Activated CD4-positive, alpha-beta memory T cell treated with anti-CD3 and anti-CD28 coated beads for 36 hours (primary cell): ENCODE measurements at regions of chr17 and their contacts with region 1.

Region 1: GRCh38 chr17:41548844-41549595 is 20.9 kb upstream of the KRT19 start:
- DNase-seq: peak; percentile 91
- H3K4me3 Mint-ChIP-seq: no peak overlapping the region
- H3K27ac Mint-ChIP-seq: peak overlapping the region; percentile 70
- H3K4me1 Mint-ChIP-seq: peaks cover 21% of the 10 kb centered on the region
- H3K27me3 Mint-ChIP-seq: peaks cover 7% of the 10 kb centered on the region

Region 2: DNA sequence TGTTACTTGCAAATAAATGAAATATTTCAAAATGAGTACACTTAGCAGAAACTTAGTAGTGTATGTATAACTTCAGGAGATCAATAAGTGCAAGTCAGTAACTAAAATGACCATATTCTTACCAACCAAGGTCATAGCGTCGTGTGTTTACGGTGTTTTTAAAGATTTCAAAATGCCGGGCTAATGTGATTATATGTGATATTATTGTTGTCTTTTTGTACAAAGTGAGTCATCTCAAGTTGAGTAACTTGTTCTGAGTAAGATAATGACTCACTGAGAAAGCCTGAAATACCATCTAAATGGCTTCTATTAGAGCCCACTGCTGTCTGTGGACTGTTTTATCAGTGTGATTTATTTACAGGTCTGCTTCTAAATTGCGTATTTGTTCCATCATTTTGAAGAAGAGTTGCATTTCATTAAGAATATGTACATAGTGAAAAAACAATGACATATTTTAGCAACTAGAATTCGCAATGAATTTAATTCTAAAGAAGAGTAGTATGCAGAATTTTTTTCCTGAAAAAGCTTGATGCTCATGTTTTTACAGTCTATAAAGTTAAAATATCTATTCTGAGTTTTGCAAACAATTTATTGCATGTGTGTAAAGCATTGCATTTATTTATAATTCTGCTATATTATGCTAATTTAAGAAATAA is 694.7 kb before region 1 on chr17:
- CTCF ChIA-PET with region 1: interaction called, 17 read pairs
- POLR2A ChIA-PET with region 1: no interaction called
- intact Hi-C with region 1: no loop called
- DNase-seq: no peak
- H3K4me3 Mint-ChIP-seq: no peak overlapping the region
- H3K27ac Mint-ChIP-seq: no peak overlapping the region
- H3K4me1 Mint-ChIP-seq: peaks cover 2% of the 10 kb centered on the region
- H3K27me3 Mint-ChIP-seq: peaks cover 6% of the 10 kb centered on the region

Region 3: DNA sequence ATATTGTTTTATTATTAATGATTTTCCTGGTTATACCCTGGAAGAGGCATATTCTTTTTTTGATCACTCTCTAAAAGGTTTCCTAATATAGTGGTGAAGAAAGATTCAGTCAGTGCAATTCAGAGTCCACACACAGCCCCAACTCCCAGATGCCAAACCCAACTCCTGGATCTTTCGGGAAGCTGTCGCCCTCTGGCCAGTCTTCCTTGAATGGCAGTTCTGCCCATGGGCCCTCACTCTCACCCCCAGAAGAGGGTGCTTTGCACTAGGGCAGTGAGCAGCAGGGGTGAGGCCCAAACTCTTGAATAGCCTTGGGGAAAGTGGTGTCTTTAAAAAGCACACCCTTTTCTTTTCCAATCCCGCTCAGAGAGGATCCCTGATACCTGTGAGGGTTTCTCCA is 92.8 kb before region 1 on chr17:
- CTCF ChIA-PET with region 1: interaction called, 13 read pairs
- POLR2A ChIA-PET with region 1: no interaction called
- intact Hi-C with region 1: no loop called
- DNase-seq: no peak
- H3K4me3 Mint-ChIP-seq: no peak overlapping the region
- H3K27ac Mint-ChIP-seq: no peak overlapping the region
- H3K4me1 Mint-ChIP-seq: no peaks in the 10 kb centered on the region
- H3K27me3 Mint-ChIP-seq: no peaks in the 10 kb centered on the region

Region 4: GRCh38 chr17:41530062-41531051 is 18.7 kb before region 1 on chr17:
- CTCF ChIA-PET with region 1: interaction called, 26 read pairs
- POLR2A ChIA-PET with region 1: no interaction called
- intact Hi-C with region 1: no loop called
- DNase-seq: no peak
- H3K4me3 Mint-ChIP-seq: no peak overlapping the region
- H3K27ac Mint-ChIP-seq: no peak overlapping the region
- H3K4me1 Mint-ChIP-seq: peaks cover 5% of the 10 kb centered on the region
- H3K27me3 Mint-ChIP-seq: peaks cover 42% of the 10 kb centered on the region

Region 5: GRCh38 chr17:41567317-41567716 is 18.3 kb after region 1 on chr17:
- CTCF ChIA-PET with region 1: interaction called, 27 read pairs
- POLR2A ChIA-PET with region 1: no interaction called
- intact Hi-C with region 1: no loop called
- DNase-seq: peak; percentile 16
- H3K4me3 Mint-ChIP-seq: no peak overlapping the region
- H3K27ac Mint-ChIP-seq: peak overlapping the region; percentile 9
- H3K4me1 Mint-ChIP-seq: peaks cover 6% of the 10 kb centered on the region
- H3K27me3 Mint-ChIP-seq: peaks cover 5% of the 10 kb centered on the region

Region 6: GRCh38 chr17:41648411-41649195 is 99.6 kb after region 1 on chr17:
- CTCF ChIA-PET with region 1: interaction called, 184 read pairs
- POLR2A ChIA-PET with region 1: interaction called, 3 read pairs
- intact Hi-C with region 1: loop called (anchors 1 kb)
- DNase-seq: peak; percentile 87
- H3K4me3 Mint-ChIP-seq: peak overlapping the region; percentile 42
- H3K27ac Mint-ChIP-seq: no peak overlapping the region
- H3K4me1 Mint-ChIP-seq: peaks cover 11% of the 10 kb centered on the region
- H3K27me3 Mint-ChIP-seq: no peaks in the 10 kb centered on the region

Region 7: DNA sequence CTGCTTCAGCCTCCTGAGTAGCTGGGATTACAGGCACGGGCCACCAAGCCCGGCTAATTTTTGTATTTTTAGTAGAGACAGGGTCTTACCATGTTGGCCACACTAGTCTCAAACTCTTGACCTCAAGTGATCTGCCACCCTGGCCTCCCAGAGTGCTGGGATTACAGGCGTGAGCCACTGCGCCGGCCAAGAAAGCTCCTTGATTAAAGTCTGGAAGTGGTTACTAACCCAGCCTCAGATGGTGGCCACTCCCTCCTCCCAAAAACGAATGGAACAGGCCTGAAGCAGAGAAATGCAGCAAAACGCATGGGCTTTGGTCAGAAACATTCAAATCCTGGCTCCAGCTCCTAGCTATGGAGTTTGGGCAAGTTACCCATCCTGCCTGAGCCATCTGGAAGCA is 275.1 kb after region 1 on chr17:
- CTCF ChIA-PET with region 1: no interaction called
- POLR2A ChIA-PET with region 1: no interaction called
- intact Hi-C with region 1: no loop called
- DNase-seq: no peak
- H3K4me3 Mint-ChIP-seq: no peak overlapping the region
- H3K27ac Mint-ChIP-seq: no peak overlapping the region
- H3K4me1 Mint-ChIP-seq: no peaks in the 10 kb centered on the region
- H3K27me3 Mint-ChIP-seq: no peaks in the 10 kb centered on the region